Sigmoid colon (tissue), 7 donors: ENCODE measurements at regions of chr6 and their contacts with region 1.

Region 1: DNA sequence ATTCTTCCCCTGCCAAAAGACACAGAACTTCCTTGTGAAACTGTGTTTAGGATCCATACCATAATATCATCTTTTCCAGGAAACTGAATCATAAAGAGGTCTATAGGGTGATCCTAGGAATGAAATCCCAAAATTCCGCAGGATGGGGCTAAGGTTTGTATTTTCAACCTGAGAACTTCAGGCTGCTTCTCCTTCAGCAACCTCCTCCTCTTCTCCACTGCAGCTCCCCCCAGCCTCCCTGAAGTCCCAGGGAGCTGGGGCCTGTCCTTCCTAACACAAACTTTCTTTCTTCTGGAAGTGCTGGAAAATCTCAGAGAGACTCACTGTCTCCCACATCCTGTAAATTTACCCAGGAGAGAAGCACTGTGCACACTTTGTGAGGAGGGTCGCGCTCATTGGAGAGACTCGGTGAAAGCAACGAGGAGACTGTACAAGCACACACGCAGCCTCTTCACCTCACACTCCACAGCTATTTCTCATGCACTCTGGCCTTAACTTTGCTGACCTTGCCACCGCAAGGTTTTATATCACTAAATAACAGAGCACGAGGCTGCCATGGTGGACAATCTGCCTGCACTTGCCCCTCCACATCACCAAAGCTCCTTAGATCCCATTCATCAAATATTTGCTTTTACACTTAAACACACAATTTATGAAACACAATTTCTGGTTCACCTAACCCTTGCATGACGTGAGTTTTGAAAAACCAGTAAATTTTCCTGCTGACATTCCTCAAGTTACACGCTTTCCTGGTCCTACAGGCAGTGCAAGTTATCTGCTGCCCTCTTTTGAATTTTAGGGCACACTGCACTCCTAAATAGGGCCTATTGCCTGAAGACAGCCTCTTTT is 14.3 kb downstream of the ID4 start:
- DNase-seq: no peak
- H3K4me3 ChIP-seq: peak overlapping the region in 2 of 4 donors; percentile 6 to 12
- H3K27ac ChIP-seq: peak overlapping the region in 3 of 4 donors; percentile 48 to 74 (median 54)
- H3K4me1 ChIP-seq: peaks cover 0 to 7% (median 5%) of the 10 kb centered on the region in 4 donors
- H3K27me3 ChIP-seq: no peaks in the 10 kb centered on the region
- CTCF ChIP-seq: peak; percentile 71 to 84 (median 82)
- EP300 ChIP-seq: no peak
- POLR2A ChIP-seq: no peak

Region 2: DNA sequence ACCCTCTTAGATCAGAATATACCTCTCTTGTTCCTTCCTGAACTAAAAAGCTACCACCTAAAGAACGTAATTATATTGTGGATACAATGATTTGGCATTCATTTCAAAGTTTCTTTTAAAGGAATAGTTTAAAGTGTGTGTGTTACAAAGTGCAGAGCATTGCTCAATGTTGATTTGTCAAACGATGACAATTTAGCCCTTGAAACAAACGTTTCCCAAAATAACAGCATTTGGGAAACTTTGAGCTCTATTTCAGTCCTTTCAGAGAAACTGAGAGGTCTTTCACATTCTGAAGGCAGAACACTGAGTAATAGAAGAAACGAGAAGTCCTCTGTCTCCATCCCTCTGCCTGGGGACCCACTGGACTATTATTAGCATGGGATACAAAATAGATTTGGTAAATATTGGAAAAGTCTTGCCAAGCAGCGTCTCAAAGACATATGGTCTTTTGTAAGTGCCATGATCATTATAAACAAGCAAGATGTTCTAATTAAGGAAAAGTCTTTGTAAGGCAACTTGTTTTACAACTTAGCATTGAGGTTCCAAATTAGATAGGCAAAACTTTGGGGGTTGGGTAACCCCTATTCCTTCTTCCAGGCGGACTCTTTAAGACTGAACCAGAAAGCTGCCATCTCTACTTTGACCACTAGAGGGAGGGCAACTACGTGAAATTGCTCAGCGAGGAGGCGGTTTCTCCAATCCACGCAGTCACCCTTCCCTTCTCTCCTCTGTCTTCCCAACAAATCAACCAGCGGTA is 1255.5 kb before region 1 on chr6:
- intact Hi-C with region 1: loop called (anchors 2 kb)
- DNase-seq: peak; percentile 75
- H3K4me3 ChIP-seq: no peak overlapping the region
- H3K27ac ChIP-seq: peak overlapping the region in 2 of 4 donors; percentile 32 to 41
- H3K4me1 ChIP-seq: peaks cover 0 to 5% (median 0%) of the 10 kb centered on the region in 4 donors
- H3K27me3 ChIP-seq: no peaks in the 10 kb centered on the region
- CTCF ChIP-seq: peak; percentile 46 to 88 (median 74)
- EP300 ChIP-seq: no peak
- POLR2A ChIP-seq: no peak

Region 3: DNA sequence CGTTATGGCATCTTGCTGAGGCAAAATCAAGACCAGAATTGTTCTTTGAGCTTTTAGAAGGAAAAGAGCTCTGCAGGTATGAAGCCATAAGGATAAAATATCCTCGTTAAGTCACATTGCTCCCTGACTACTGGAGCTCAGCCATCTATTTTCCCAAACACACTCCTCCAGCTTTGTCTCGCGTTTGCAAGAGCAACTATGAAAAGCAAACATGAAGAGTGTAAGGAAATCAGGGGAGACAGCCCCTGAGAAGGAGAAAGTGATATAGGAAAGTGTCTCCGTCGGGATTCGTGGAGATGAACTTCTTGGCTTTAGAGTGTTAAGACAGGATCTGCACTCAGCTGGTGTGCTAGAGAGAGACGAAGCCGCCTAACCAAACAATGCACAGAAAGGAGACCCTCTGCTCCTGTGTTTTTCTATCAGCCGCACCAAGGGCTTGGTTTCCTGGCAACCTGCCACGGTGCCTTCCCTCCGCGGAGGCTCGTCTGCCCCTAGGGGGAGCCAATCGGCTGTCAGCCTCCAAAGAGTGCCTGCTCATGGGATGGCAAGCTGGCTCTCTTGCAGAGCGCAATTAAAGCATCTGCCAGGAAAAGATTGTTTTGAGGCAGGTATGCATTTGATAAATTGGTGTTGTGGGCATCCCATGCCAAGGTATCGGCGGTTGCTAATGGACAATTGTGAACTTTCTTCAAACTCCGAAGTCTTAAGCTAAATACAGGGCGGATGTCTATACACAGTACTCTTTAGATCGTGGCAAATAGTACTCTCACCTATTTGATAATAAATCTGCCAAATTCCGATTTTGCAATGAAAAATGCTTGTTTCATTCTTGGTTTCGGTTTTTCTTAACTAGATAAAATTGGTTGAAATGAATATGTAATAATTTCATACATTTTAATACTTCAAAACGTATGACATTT is 861.1 kb before region 1 on chr6:
- intact Hi-C with region 1: loop called (anchors 10 kb)
- DNase-seq: peak; percentile 77
- H3K4me3 ChIP-seq: peak overlapping the region in 2 of 4 donors; percentile 10 to 20
- H3K27ac ChIP-seq: no peak overlapping the region
- H3K4me1 ChIP-seq: peaks cover 0 to 6% (median 3%) of the 10 kb centered on the region in 4 donors
- H3K27me3 ChIP-seq: no peaks in the 10 kb centered on the region
- CTCF ChIP-seq: peak in 2 of 4 experiments; percentile 24 to 54
- EP300 ChIP-seq: no peak
- POLR2A ChIP-seq: no peak

Region 4: GRCh38 chr6:19024737-19025136 is 826.7 kb before region 1 on chr6:
- intact Hi-C with region 1: loop called (anchors 10 kb)
- DNase-seq: no peak
- H3K4me3 ChIP-seq: no peak overlapping the region
- H3K27ac ChIP-seq: no peak overlapping the region
- H3K4me1 ChIP-seq: no peaks in the 10 kb centered on the region
- H3K27me3 ChIP-seq: no peaks in the 10 kb centered on the region
- CTCF ChIP-seq: peak in 2 of 4 experiments; percentile 21 to 29
- EP300 ChIP-seq: no peak
- POLR2A ChIP-seq: no peak

Region 5: GRCh38 chr6:19452495-19452894 is 399.0 kb before region 1 on chr6:
- intact Hi-C with region 1: loop called (anchors 10 kb)
- DNase-seq: no peak
- H3K4me3 ChIP-seq: no peak overlapping the region
- H3K27ac ChIP-seq: no peak overlapping the region
- H3K4me1 ChIP-seq: no peaks in the 10 kb centered on the region
- H3K27me3 ChIP-seq: no peaks in the 10 kb centered on the region
- CTCF ChIP-seq: no peak
- EP300 ChIP-seq: no peak
- POLR2A ChIP-seq: no peak

Region 6: GRCh38 chr6:19812512-19813119 is 38.8 kb before region 1 on chr6:
- intact Hi-C with region 1: loop called (anchors 5 kb)
- DNase-seq: no peak
- H3K4me3 ChIP-seq: no peak overlapping the region
- H3K27ac ChIP-seq: no peak overlapping the region
- H3K4me1 ChIP-seq: no peaks in the 10 kb centered on the region
- H3K27me3 ChIP-seq: no peaks in the 10 kb centered on the region
- CTCF ChIP-seq: peak; percentile 13 to 64 (median 40)
- EP300 ChIP-seq: no peak
- POLR2A ChIP-seq: no peak